Mammary epithelial cell (primary cell): ENCODE measurements at regions of chr6 and their contacts with region 1.

Region 1: GRCh38 chr6:29589423-29590048 is 4.6 kb downstream of the OR2H2 start:
- DNase-seq: peak; percentile 37
- H3K4me3 ChIP-seq: no peak overlapping the region
- H3K27ac ChIP-seq: no peak overlapping the region
- H3K4me1 ChIP-seq: no peaks in the 10 kb centered on the region
- H3K27me3 ChIP-seq: no peaks in the 10 kb centered on the region
- CTCF ChIP-seq: peak; percentile 98 to 100

Region 2: DNA sequence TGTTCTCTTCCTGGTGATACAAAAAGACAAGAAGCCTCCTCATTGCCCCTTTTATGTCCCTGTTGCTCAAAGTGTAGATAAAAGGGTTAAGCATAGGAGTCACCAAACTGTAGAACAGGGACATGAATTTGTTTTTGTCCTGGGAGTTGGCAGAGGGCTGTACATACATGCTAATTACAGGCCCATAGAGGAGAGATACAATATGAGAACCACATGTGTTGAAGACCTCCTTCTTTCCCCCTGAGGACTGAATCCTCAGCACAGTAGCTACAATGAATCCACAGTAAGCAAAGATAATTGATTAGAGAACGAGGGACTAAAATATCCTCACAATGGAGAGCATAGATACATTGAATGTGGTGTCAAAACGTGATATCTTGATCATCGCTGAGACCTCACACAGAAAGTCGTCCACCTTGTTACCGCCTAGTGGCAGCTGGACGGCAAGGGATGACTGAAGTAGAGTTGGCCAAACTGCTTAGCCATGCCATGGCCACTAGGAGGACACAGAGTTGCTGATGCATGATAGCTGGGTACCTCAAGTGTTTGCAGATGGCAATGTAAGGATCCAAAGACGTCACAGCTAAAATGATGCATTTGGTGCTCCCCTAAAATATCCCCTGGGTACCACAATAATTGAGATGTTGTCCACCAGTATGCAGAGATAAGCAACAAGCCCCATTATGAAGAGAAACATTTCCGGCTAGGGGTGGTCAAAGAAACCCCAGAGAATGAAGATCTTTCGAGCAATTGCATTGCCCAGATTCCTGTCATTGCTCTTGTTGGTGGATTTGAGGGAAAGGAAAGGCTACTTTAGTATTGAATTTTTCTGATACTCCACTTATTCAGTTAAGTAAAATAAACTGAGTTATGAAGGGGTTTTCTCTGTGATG is 517.5 kb before region 1 on chr6:
- CTCF ChIA-PET with region 1: no interaction called
- dilution Hi-C with region 1: no loop called
- in situ Hi-C with region 1: no loop called
- intact Hi-C with region 1: loop called (anchors 10 kb)
- DNase-seq: peak; percentile 42
- H3K4me3 ChIP-seq: no peak overlapping the region
- H3K27ac ChIP-seq: no peak overlapping the region
- H3K4me1 ChIP-seq: no peaks in the 10 kb centered on the region
- H3K27me3 ChIP-seq: no peaks in the 10 kb centered on the region
- CTCF ChIP-seq: peak; percentile 74 to 93

Region 3: GRCh38 chr6:29294499-29294914 is 295.0 kb before region 1 on chr6:
- CTCF ChIA-PET with region 1: no interaction called
- dilution Hi-C with region 1: no loop called
- in situ Hi-C with region 1: no loop called
- intact Hi-C with region 1: no loop called
- DNase-seq: no peak
- H3K4me3 ChIP-seq: no peak overlapping the region
- H3K27ac ChIP-seq: no peak overlapping the region
- H3K4me1 ChIP-seq: no peaks in the 10 kb centered on the region
- H3K27me3 ChIP-seq: no peaks in the 10 kb centered on the region
- CTCF ChIP-seq: no peak

Region 4: DNA sequence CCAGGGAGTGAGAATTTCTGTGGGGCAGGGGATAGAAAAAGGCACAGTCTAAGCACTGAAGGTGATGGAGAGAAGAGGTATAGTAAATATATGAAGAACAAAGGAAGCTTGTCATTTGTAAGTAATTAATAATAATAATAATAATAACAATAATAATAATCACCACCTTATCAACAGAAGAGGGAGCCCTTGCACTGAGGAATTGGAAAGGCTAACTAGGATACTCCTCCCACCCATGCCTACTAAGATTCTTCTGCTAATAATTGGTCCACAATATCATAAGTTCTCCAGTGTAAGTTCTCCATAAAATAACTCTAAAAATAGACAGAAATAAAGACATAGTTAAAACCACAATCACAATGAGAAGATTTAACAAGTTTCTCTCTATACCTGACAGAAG is 213.5 kb before region 1 on chr6:
- CTCF ChIA-PET with region 1: interaction called, 3 read pairs
- dilution Hi-C with region 1: no loop called
- in situ Hi-C with region 1: no loop called
- intact Hi-C with region 1: loop called (anchors 1 kb)
- DNase-seq: peak; percentile 6
- H3K4me3 ChIP-seq: no peak overlapping the region
- H3K27ac ChIP-seq: no peak overlapping the region
- H3K4me1 ChIP-seq: no peaks in the 10 kb centered on the region
- H3K27me3 ChIP-seq: no peaks in the 10 kb centered on the region
- CTCF ChIP-seq: peak; percentile 28 to 39

Region 5: GRCh38 chr6:29414588-29414987 is 174.9 kb before region 1 on chr6 and contains the start of gene OR12D1:
- CTCF ChIA-PET with region 1: no interaction called
- dilution Hi-C with region 1: no loop called
- in situ Hi-C with region 1: loop called (anchors 10 to 25 kb)
- intact Hi-C with region 1: loop called (anchors 1 kb)
- DNase-seq: peak; percentile 65
- H3K4me3 ChIP-seq: no peak within 1 kb of the TSS
- H3K27ac ChIP-seq: no peak within 1 kb of the TSS
- H3K4me1 ChIP-seq: no peaks in the 10 kb centered on the region
- H3K27me3 ChIP-seq: peaks cover 4% of the 10 kb centered on the region
- CTCF ChIP-seq: peak; percentile 55 to 79
- total RNA-seq, gene OR12D1: not detected

Region 6: DNA sequence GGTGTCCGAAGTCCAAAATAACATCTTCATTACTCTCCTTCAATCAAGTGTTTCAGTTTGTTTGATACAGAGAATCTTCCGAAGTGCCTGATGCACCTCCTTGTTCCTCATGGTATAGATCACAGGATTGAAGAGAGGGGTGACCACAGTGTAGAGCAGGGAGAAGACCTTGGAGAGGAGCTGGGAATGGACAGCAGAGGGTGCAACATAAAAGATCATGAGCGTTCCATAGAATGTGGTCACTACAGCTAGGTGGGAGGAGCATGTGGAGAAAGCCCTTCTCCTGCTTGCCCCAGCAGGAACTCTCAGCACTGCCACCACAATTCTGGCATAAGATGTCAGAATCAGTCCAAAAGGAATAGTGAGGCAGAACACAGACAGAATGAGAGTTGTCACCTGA is 162.9 kb before region 1 on chr6:
- CTCF ChIA-PET with region 1: no interaction called
- dilution Hi-C with region 1: no loop called
- in situ Hi-C with region 1: loop called in 1 of 2 experiments (anchors 25 kb)
- intact Hi-C with region 1: loop called (anchors 1 kb)
- DNase-seq: no peak
- H3K4me3 ChIP-seq: no peak overlapping the region
- H3K27ac ChIP-seq: no peak overlapping the region
- H3K4me1 ChIP-seq: no peaks in the 10 kb centered on the region
- H3K27me3 ChIP-seq: peaks cover 3% of the 10 kb centered on the region
- CTCF ChIP-seq: no peak

Region 7: DNA sequence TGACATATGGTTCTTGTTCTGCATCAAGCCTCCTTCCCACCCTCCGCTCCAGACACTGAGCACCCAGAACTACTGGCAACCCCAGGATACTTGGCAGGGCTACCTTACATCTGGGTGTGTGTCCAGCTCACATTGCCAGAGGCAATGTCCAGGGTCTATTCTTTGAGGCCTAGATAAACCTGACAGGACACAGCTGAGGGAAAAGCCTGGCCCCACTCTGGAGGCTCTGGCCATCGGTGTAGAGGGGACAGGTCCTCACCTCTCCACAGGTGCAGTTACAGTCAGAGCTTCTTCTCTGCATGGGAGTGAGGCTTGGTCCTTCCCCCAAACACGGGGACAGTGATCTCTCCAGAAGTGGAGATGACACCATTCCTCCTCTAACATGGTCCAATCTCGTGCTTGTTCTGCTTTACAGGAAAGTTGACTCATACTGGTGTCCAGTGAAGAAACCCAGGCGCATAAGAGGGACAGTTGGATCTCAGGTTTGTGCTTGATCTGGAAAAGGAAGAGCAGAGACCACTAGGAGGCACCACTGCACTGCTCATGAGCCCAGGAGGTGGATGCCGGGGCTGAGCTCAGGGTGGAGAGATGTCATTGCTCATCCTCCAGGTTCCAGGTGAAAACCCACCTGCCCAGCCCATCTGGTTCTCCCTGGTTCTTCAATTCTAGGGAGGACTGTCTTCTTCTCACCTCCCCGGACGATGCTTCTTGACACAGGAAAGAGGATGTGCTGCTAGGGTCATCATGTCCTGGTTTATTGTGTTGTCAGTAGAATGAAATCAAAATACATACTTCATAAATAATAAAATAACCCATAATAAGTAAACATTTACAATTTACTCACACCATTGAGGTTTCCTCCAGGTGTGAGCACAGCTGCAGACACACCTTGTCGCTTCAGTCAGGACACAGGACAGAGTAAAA is 148.4 kb after region 1 on chr6:
- CTCF ChIA-PET with region 1: no interaction called
- dilution Hi-C with region 1: no loop called
- in situ Hi-C with region 1: no loop called
- intact Hi-C with region 1: no loop called
- DNase-seq: peak; percentile 74
- H3K4me3 ChIP-seq: no peak overlapping the region
- H3K27ac ChIP-seq: no peak overlapping the region
- H3K4me1 ChIP-seq: peaks cover 14% of the 10 kb centered on the region
- H3K27me3 ChIP-seq: no peaks in the 10 kb centered on the region
- CTCF ChIP-seq: peak; percentile 76 to 88